Endothelial cell of umbilical vein (primary cell): ENCODE measurements at regions of chr6 and their contacts with region 1.

Region 1: GRCh38 chr6:116847227-116847626 is 18.3 kb upstream of the GPRC6A start:
- DNase-seq: peak; percentile 36
- H3K4me3 ChIP-seq: no peak overlapping the region
- H3K27ac ChIP-seq: no peak overlapping the region
- H3K4me1 ChIP-seq: no peaks in the 10 kb centered on the region
- H3K27me3 ChIP-seq: no peaks in the 10 kb centered on the region
- CTCF ChIP-seq: peak in 1 of 2 donors; percentile 7
- POLR2A ChIP-seq: no peak

Region 2: GRCh38 chr6:116695401-116695800 is 151.8 kb before region 1 on chr6:
- CTCF ChIA-PET with region 1: no interaction called
- POLR2A ChIA-PET with region 1: no interaction called
- dilution Hi-C with region 1: no loop called
- intact Hi-C with region 1: no loop called
- DNase-seq: no peak
- H3K4me3 ChIP-seq: no peak overlapping the region
- H3K27ac ChIP-seq: no peak overlapping the region
- H3K4me1 ChIP-seq: no peaks in the 10 kb centered on the region
- H3K27me3 ChIP-seq: no peaks in the 10 kb centered on the region
- CTCF ChIP-seq: no peak
- POLR2A ChIP-seq: no peak

Region 3: GRCh38 chr6:116779573-116780164 is 67.6 kb before region 1 on chr6:
- CTCF ChIA-PET with region 1: interaction called, 13 read pairs
- POLR2A ChIA-PET with region 1: no interaction called
- dilution Hi-C with region 1: no loop called
- intact Hi-C with region 1: loop called (anchors 1 kb)
- DNase-seq: peak; percentile 36
- H3K4me3 ChIP-seq: no peak overlapping the region
- H3K27ac ChIP-seq: no peak overlapping the region
- H3K4me1 ChIP-seq: no peaks in the 10 kb centered on the region
- H3K27me3 ChIP-seq: no peaks in the 10 kb centered on the region
- CTCF ChIP-seq: peak; percentile 16 to 34
- POLR2A ChIP-seq: no peak